Naive thymus-derived CD8-positive, alpha-beta T cell (primary cell): ENCODE measurements at regions of chr11 and their contacts with region 1.

Region 1: DNA sequence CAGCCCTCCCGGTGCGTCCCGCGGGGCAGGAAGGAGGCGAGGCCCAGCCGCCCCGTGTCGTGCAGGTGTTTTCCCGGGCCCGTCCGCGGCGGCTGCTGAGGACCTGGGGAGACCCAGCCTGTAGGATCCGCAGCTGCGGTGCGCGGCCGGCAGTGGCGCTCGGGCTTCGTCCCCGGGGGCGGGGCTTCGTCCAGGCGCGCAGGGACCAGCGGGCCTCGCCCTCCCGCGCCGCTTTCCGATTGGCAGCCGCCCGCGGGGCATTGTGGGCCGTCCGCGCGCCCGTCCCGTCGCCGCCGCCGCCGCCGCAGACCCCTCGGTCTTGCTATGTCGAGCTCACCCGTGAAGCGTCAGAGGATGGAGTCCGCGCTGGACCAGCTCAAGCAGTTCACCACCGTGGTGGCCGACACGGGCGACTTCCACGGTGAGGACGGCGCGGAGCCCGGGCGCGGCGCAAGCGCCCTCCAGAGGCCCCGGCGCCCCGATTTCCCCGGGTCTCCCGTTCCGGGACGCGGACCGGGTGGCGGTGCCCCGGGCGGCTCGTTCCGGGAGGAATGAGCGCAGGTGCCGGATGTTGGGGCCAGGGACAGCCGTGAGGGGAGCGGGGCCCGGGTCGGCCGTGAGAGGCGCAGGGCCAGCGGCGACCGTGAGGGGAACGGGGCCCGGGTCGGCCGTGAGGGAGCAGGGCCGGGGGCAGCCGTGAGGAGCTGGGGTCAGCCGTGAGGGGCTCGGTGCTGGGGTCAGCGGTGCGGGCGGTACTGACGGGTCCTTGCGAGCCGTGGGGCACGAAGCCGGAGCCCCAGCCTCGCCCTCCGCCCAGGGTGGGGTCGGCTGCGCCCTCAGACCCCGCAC is at the start of gene TALDO1:
- DNase-seq: peak; percentile 48 to 82 (median 70)
- ATAC-seq: peak; percentile 80 to 87
- H3K4me3 Mint-ChIP-seq: peak within 1 kb of the TSS; percentile 79 to 91 (median 86)
- H3K27ac Mint-ChIP-seq: peak within 1 kb of the TSS; percentile 35 to 89 (median 79)
- H3K4me1 Mint-ChIP-seq: peaks cover 4 to 28% (median 22%) of the 10 kb centered on the region in 4 donors
- H3K27me3 Mint-ChIP-seq: no peaks in the 10 kb centered on the region
- polyA plus RNA-seq, gene TALDO1: 160 to 173 (median 166) TPM

Region 2: DNA sequence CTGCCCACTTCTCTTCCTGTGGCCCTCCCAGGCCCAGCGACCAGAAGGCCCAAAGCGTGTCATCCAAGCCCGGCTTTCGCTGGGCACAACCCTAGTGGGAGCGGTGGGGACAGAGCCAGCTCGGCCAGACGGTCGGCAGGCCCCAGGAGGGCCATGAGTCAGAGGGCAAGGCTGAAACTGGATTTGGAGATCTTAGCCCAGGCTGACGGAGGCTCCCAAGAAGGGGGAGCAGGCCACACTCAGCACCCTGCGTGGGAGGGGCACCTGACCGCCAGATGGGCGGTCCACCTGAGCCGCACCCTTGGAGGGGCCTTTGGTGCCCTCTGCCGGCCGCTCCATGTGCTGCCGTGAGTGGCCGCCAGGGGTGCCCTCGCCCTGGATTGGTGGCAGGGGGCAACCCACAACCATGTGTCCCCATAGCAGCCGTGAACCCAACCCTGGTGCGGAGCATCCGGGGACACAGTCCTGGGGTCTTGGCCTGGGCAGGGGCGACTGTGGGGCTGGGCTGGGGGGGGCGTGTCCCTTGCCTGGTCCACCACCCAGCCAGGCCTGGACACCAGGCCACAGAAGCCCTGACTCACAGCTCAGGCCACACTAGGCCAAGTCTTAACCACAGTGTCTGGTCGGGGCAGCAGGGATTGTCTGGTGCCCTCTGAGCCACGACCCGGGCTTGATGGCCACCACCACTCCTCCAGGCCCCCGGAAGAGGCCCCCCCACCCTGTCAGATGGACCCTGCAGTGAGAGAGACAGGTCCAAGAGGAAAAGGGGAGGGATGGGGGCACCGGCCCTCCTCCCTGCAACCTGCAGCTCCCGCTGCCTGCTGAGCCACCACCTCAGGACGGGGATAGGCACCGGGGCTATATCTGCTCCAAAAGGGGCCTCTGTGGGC is 19.3 kb before region 1 on chr11:
- POLR2A ChIA-PET with region 1: interaction called, 18 read pairs
- DNase-seq: peak; percentile 66 to 85 (median 79)
- ATAC-seq: peak; percentile 67 to 82
- H3K4me3 Mint-ChIP-seq: no peak overlapping the region
- H3K27ac Mint-ChIP-seq: no peak overlapping the region
- H3K4me1 Mint-ChIP-seq: peaks cover 4 to 15% (median 12%) of the 10 kb centered on the region in 4 donors
- H3K27me3 Mint-ChIP-seq: peaks cover 2 to 5% (median 4%) of the 10 kb centered on the region in 5 donors

Region 3: GRCh38 chr11:890794-891540 is 143.6 kb after region 1 on chr11:
- POLR2A ChIA-PET with region 1: no interaction called
- DNase-seq: no peak
- ATAC-seq: no peak
- H3K4me3 Mint-ChIP-seq: no peak overlapping the region
- H3K27ac Mint-ChIP-seq: no peak overlapping the region
- H3K4me1 Mint-ChIP-seq: peaks cover 0 to 7% (median 5%) of the 10 kb centered on the region in 4 donors
- H3K27me3 Mint-ChIP-seq: no peaks in the 10 kb centered on the region